ENCODE measurements at regions of chr1 and their contacts with region 1.

Region 1: DNA sequence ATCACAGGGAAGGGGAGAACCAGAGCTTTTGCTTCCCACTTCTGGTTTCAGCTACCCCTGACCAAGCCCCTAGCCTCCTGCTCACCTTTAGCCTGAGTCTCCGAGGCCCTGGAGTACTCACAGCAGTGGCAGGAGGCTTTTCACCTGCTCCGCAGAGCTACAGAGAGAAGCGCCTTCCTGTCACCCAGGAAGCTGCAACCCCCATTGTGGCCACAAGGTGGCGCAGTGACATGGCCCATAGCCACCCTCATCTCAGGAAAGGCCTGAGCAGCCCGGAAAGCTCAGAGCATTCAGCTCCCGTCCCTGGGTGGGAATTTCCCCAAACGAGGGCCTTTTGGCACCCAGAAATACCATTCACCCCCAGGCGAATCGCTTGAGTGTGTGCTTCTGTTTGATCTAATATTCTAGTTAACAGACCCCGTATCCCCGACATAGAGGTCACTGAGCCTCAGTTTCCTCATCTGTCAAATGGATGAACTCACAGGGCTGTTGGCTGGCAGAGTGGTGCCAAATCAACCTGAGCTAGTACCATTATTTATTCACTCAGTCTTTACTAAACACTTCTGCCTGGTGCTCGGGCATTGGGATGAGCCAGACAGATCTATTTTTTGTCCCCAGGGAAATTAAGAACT is 25.3 kb downstream of the A3GALT2 start:
- DNase-seq: peak; percentile 96

Region 2: DNA sequence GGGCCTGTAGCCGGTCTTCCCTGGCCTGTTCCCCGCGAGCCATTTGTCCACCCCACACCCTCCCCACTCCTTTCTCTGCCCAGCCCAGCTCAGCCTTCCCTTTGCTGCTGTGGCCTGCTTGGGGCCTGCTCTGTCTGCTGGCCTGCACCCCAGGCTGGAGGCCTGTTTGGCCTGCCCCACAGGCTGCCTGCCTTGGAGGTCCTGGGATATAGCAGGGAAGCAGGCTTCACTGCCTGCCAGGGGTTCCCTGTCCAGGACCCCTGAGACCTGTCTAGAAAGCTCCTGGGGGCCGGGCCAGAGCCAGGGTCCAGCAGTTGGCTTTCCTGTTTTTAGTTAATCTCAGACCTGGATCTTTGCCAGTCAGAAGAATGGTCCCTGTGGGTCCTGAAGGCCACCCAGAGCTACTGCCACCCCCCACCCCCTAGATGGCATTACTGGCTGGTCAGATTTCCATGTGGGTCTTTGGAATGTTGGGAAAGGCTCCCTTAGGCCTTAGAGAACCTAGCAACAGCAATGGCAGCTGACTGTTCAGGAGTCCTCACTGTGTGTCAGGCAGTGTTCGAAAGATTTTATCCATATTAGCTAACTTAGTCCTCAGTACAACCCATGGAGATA is 31.6 kb before region 1 on chr1:
- intact Hi-C with region 1: loop called in 1 of 2 experiments (anchors 1 kb)
- DNase-seq: no peak

Region 3: GRCh38 chr1:33338440-33339211 is 43.1 kb after region 1 on chr1:
- intact Hi-C with region 1: loop called in 1 of 2 experiments (anchors 5 kb)
- DNase-seq: no peak

Region 4: DNA sequence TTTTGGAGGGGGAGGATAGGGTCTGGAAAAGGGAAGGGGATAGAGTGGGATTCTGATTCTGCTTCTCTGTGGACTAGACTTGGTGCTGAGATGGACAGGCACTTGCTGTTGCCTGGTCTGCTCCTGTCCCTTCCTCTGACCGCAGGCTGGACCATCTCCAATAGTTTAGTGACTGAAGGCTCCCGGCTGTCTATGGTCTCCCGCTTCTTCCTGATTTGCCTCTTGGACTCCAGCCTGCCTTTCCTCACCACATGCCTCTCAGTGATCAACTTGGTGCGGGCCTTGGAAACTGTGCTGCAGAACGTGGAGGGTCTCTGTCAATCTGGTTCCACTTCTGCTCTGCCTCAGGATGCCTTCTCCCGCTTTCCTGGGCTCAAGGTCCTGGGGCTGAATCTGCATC is 170.6 kb after region 1 on chr1:
- intact Hi-C with region 1: loop called (anchors 5 kb)
- DNase-seq: no peak

Region 5: DNA sequence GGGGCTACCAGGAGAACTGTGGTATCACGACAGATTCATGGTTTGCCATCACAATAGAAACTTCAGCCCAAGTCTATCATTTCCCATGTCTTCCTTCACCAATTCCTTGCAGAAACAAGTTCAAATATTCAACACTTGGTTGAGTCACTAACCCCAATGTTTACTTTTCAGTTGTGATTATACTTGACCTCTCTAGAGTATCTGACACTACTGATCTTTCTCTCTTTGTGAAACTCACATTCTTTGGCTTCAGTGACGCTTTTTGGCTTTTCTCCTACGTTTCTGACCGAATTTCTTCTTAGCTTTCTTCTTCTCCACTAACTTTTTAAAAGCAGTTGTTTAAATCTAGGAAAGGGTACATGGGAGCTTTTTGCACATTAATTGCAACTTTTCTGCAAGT is 519.5 kb after region 1 on chr1:
- intact Hi-C with region 1: no loop called
- DNase-seq: no peak

Measured in posterior vena cava (tissue), 2 donors.